AG04450 (cell line): ENCODE measurements at regions of chr1 and their contacts with region 1.

Region 1: GRCh38 chr1:181166377-181167196 is 78.1 kb downstream of the IER5 start:
- DNase-seq: peak; percentile 34
- H3K4me3 ChIP-seq: no peak overlapping the region
- H3K27ac ChIP-seq: no peak overlapping the region
- H3K27me3 ChIP-seq: peaks cover 2% of the 10 kb centered on the region
- CTCF ChIP-seq: peak; percentile 93

Region 2: GRCh38 chr1:180842052-180842451 is 324.5 kb before region 1 on chr1:
- CTCF ChIA-PET with region 1: no interaction called
- POLR2A ChIA-PET with region 1: no interaction called
- DNase-seq: peak; percentile 53
- H3K4me3 ChIP-seq: no peak overlapping the region
- H3K27ac ChIP-seq: no peak overlapping the region
- H3K27me3 ChIP-seq: no peaks in the 10 kb centered on the region
- CTCF ChIP-seq: no peak

Region 3: GRCh38 chr1:180881806-180882509 is 284.6 kb before region 1 on chr1:
- CTCF ChIA-PET with region 1: interaction called, 135 read pairs
- POLR2A ChIA-PET with region 1: no interaction called
- DNase-seq: no peak
- H3K4me3 ChIP-seq: no peak overlapping the region
- H3K27ac ChIP-seq: no peak overlapping the region
- H3K27me3 ChIP-seq: no peaks in the 10 kb centered on the region
- CTCF ChIP-seq: peak; percentile 60

Region 4: DNA sequence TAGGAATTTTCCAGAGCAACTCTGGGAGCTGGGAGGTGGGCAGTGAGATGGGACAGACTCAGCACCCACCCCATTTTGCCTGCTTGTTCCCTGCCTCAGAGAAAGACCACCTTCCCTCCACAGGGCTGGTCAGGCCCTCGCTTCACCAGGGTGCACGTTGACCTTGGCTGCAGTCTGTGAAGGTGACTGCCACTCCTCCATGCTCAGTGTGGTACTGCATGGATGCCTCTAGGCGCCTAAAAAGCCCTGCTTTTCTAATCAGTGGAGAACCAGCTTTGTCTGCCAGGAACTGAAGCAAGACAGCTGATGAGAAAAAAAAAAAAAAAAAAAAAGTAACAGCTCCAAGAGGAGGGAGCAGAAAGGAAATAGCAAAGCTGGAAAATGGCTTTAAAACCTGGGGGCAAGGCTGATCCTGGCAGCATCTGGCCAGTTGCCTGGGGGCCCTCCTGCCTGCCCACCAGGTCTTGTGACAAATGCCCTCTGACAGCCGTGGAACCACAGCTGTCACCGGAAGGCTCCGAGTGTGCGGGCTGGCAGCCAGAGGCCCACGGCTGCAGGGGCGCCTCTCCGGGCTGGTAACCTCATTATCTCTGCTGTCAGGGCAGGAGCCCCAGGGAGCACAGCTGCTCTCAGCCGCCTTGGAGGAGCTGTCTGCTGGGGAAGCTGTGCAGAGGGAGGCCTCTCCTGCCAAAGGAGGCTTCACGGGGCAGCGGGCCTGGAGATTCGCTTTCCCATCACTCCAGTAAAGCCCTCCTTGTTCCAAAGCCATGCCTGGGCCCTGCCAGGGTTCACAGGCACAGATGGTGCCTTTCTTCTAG is 240.2 kb before region 1 on chr1:
- CTCF ChIA-PET with region 1: interaction called, 11 read pairs
- POLR2A ChIA-PET with region 1: no interaction called
- DNase-seq: no peak
- H3K4me3 ChIP-seq: no peak overlapping the region
- H3K27ac ChIP-seq: peak overlapping the region; percentile 52
- H3K27me3 ChIP-seq: no peaks in the 10 kb centered on the region
- CTCF ChIP-seq: no peak

Region 5: GRCh38 chr1:180951836-180952656 is 214.5 kb before region 1 on chr1:
- CTCF ChIA-PET with region 1: no interaction called
- POLR2A ChIA-PET with region 1: interaction called, 13 read pairs
- DNase-seq: no peak
- H3K4me3 ChIP-seq: no peak overlapping the region
- H3K27ac ChIP-seq: no peak overlapping the region
- H3K27me3 ChIP-seq: no peaks in the 10 kb centered on the region
- CTCF ChIP-seq: no peak